Left colon (tissue), 2 donors: ENCODE measurements at regions of chr5 and their contacts with region 1.

Region 1: GRCh38 chr5:77143998-77144836 is 57.1 kb upstream of the ZBED3 start:
- DNase-seq: peak; percentile 59 to 73
- ATAC-seq: peak; percentile 85

Region 2: GRCh38 chr5:77241420-77241819 is 97.2 kb after region 1 on chr5:
- intact Hi-C with region 1: no loop called
- DNase-seq: no peak
- ATAC-seq: no peak

Region 3: GRCh38 chr5:77437194-77437593 is 293.0 kb after region 1 on chr5:
- intact Hi-C with region 1: loop called in 1 of 2 experiments (anchors 10 kb)
- DNase-seq: no peak
- ATAC-seq: peak; percentile 46

Region 4: DNA sequence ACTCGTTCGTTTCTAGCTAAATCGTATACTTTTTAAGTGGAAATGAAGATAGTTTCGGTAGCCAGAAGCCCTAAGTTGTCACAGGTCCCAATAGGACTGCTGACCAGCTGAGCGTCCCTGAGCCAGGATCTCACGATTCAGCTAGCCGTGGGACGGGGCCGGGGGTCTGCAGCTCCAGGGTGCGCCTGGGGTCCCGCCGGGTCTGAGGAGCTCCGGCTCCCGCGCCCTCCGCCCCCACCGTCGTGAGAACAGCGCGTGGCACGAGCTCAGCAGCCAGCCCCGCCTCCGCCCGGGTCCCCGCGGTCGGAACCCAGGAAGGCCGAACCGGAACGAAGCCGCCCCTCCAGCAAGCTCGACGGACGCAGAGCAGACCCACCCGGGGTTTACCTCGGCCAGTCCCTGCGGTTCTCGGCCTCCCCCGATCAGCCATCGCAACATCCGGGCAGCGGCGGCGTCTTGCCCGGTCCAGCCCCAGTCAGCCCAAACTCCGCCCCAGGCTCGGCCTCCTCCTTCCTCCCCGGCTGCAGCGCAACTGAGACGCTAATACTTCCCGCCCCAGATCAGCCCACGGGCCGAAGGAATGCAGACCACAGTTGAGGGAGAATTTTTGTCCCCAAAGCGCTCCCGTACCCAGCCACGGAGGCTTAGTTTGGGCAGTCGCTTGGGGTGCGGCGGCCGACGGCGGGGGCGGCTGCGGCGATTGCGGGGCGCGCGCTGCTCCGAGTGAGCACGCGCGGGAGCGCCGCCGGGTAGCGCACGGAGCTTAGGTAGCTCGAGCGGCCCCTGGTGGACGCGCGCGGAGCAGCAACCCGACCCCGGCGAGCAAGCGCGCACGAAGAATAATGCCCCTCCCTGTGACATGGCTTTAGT is 347.8 kb after region 1 on chr5 and contains the start of gene WDR41:
- intact Hi-C with region 1: loop called in 1 of 2 experiments (anchors 5 kb)
- DNase-seq: peak; percentile 90 to 95
- ATAC-seq: peak; percentile 93
- total RNA-seq, gene WDR41: 18.3 to 28.7 TPM